ENCODE measurements at regions of chr1 and their contacts with region 1.

Region 1: GRCh38 chr1:2525920-2526823 is at the start of gene PANK4:
- DNase-seq: peak; percentile 96
- ATAC-seq: peak; percentile 93
- H3K4me3 ChIP-seq: peak within 1 kb of the TSS; percentile 43 to 81
- H3K27ac ChIP-seq: peak within 1 kb of the TSS in 1 of 2 donors; percentile 35
- H3K4me1 ChIP-seq: no peaks in the 10 kb centered on the region
- H3K27me3 ChIP-seq: no peaks in the 10 kb centered on the region
- total RNA-seq, gene PANK4: 19.6 to 28.2 TPM

Region 2: DNA sequence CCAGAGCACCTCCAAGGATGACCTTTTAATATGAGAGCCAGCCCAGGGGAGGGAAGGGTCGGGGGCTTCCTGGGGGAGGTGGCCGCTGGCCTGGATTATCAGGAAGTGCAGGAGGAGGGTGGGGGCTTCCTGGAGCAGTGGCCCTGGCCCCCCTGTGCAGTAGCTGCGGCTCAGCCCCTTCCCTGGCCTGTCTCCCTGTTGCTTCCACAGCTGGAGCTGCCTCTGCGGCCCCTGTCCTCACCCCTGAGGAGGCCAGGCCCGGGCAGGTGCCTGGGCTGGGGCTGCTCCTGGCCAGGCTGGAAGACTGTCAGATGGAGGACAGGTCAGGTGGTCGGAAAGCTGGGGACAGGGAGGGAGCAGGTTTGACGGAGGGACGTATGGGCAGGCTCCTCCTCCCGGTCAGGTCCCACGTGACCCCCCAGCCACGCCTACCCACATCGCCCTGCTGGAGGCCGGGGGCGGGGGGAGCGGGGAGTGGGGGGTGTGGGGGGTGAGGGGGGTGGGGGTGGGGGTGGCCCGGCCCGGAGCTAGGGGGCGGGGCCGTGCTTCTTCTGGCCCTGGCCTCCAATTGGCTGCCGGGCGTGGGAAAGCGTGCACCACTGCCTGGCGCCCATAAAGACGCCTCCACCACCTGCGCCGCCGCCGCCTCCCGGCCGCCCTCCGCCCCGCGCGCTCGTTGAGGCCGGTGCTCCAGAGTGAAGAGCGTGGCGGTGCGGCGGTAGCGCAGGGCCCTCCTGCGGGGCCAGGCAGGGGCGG is 19.8 kb after region 1 on chr1:
- intact Hi-C with region 1: loop called in 1 of 2 experiments (anchors 1 kb)
- DNase-seq: peak; percentile 93 to 94
- ATAC-seq: peak; percentile 77
- H3K4me3 ChIP-seq: peak overlapping the region in 1 of 2 donors; percentile 43
- H3K27ac ChIP-seq: no peak overlapping the region
- H3K4me1 ChIP-seq: no peaks in the 10 kb centered on the region
- H3K27me3 ChIP-seq: no peaks in the 10 kb centered on the region

Region 3: GRCh38 chr1:2586154-2587070 is 60.2 kb after region 1 on chr1 and contains the start of gene PRXL2B:
- intact Hi-C with region 1: loop called in 1 of 2 experiments (anchors 10 kb)
- DNase-seq: peak; percentile 100
- ATAC-seq: peak; percentile 96
- H3K4me3 ChIP-seq: peak within 1 kb of the TSS; percentile 61 to 70
- H3K27ac ChIP-seq: peak within 1 kb of the TSS; percentile 45 to 53
- H3K4me1 ChIP-seq: no peaks in the 10 kb centered on the region
- H3K27me3 ChIP-seq: no peaks in the 10 kb centered on the region
- total RNA-seq, gene PRXL2B: 7.1 to 15.1 TPM